H1 (cell line): ENCODE measurements at regions of chr9 and their contacts with region 1.

Region 1: DNA sequence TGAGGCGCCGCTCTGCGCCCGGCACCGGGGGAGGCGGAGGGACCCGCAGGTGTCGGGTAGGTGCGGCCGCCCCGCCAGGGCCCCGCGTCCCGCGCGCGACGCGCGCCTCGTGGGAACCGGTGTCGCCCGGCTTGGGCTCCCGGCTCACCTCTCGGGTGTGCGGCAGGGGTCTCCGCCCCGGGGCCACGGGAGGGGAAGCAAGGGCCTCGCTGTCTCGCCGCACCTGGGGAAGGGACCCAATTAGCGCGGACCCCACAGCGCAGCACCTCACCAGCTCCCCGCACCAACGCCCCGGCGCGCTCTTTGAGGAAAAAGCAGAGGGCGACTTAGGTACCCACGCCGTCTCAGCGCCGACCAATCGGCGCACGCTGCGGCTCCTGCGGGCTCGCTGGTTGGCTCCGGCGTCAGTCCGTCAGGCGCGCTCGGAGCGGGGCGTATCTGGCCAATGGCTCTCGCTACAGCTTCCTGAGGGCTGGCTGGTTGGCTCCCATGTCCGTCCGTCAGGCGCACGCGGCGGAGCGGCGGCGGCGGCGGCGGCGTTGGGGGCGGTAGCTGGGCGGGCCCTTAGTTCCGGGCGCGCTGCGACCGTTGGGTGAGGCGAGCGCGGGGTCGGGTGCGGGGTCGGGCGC is at the start of gene TRAF2:
- DNase-seq: peak; percentile 98 to 99
- H3K4me3 ChIP-seq: peak within 1 kb of the TSS; percentile 74 to 98 (median 78)
- H3K27ac ChIP-seq: 0 out of 2 replicates have a peak within 1 kb of the TSS, but pooled peaks have one; percentile 42
- H3K4me1 ChIP-seq: peaks cover 0 to 6% (median 2%) of the 10 kb centered on the region in 4 experiments; a peak in 4 of 7 replicates
- H3K27me3 ChIP-seq: no peaks in the 10 kb centered on the region
- CTCF ChIP-seq: no peak
- EP300 ChIP-seq: no peak
- POLR2A ChIP-seq: peak in 1 of 2 experiments; percentile 66; a peak in 1 of 3 replicates
- RAD21 ChIP-seq: no peak
- total RNA-seq, gene TRAF2: 50.2 and 50.5 TPM in 2 replicates

Region 2: GRCh38 chr9:136849038-136849959 is 36.8 kb before region 1 on chr9 and contains the start of gene PHPT1:
- CTCF ChIA-PET with region 1: interaction called, 7 read pairs
- POLR2A ChIA-PET with region 1: interaction called, 15 read pairs
- DNase-seq: peak; percentile 98
- H3K4me3 ChIP-seq: peak within 1 kb of the TSS; percentile 81 to 89 (median 84)
- H3K27ac ChIP-seq: peak within 1 kb of the TSS; percentile 90
- H3K4me1 ChIP-seq: peaks cover 0 to 18% (median 8%) of the 10 kb centered on the region in 4 experiments; a peak in 5 of 7 replicates
- H3K27me3 ChIP-seq: peaks cover 2 to 12% (median 7%) of the 10 kb centered on the region in 4 experiments; a peak in 6 of 7 replicates
- CTCF ChIP-seq: no peak
- EP300 ChIP-seq: no peak
- POLR2A ChIP-seq: peak in 1 of 2 experiments; percentile 99; a peak in 2 of 3 replicates
- RAD21 ChIP-seq: no peak
- total RNA-seq, gene PHPT1: 109 and 111 TPM in 2 replicates

Region 3: GRCh38 chr9:136858844-136859757 is 27.0 kb before region 1 on chr9:
- CTCF ChIA-PET with region 1: interaction called, 8 read pairs
- POLR2A ChIA-PET with region 1: interaction called, 16 read pairs
- DNase-seq: peak in 1 of 2 experiments; percentile 46
- H3K4me3 ChIP-seq: no peak overlapping the region
- H3K27ac ChIP-seq: no peak overlapping the region
- H3K4me1 ChIP-seq: no peaks in the 10 kb centered on the region; a peak in 1 of 7 replicates
- H3K27me3 ChIP-seq: no peaks in the 10 kb centered on the region
- CTCF ChIP-seq: no peak
- EP300 ChIP-seq: no peak
- POLR2A ChIP-seq: no peak
- RAD21 ChIP-seq: no peak

Region 4: GRCh38 chr9:136865735-136866103 is 20.3 kb before region 1 on chr9:
- CTCF ChIA-PET with region 1: interaction called, 8 read pairs
- POLR2A ChIA-PET with region 1: interaction called, 16 read pairs
- DNase-seq: no peak
- H3K4me3 ChIP-seq: peak overlapping the region; percentile 49 to 99 (median 70)
- H3K27ac ChIP-seq: peak overlapping the region; percentile 81; the same call in 1 of the 2 replicates
- H3K4me1 ChIP-seq: peaks cover 0 to 6% (median 5%) of the 10 kb centered on the region in 4 experiments; a peak in 5 of 7 replicates
- H3K27me3 ChIP-seq: no peaks in the 10 kb centered on the region
- CTCF ChIP-seq: no peak
- EP300 ChIP-seq: no peak
- POLR2A ChIP-seq: no peak
- RAD21 ChIP-seq: no peak

Region 5: DNA sequence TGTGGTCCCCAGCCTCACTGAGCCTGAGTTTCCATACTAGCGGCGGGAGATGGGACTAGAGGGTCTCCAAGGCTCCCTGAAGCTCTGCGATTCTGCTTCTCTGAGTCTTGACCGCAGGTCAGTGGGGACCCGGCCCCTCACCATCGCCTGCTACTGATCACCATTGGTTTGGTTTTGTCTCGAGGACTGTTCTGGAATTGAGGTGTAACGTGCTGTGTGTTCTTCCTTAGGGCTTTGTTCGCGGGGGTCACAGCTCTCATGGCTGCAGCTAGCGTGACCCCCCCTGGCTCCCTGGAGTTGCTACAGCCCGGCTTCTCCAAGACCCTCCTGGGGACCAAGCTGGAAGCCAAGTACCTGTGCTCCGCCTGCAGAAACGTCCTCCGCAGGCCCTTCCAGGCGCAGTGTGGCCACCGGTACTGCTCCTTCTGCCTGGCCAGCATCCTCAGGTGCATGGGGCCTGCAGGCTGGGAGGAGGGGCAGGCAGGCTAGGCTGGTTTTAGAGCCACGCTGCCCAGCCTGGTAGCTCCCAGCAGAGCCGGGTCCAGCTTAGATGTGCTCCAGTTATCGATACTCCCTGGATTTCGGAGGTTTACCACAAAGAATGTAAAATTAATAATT is 12.5 kb after region 1 on chr9:
- CTCF ChIA-PET with region 1: interaction called, 4 read pairs
- POLR2A ChIA-PET with region 1: interaction called, 10 read pairs
- DNase-seq: no peak
- H3K4me3 ChIP-seq: no peak overlapping the region
- H3K27ac ChIP-seq: no peak overlapping the region
- H3K4me1 ChIP-seq: no peaks in the 10 kb centered on the region; a peak in 1 of 7 replicates
- H3K27me3 ChIP-seq: no peaks in the 10 kb centered on the region
- CTCF ChIP-seq: no peak
- EP300 ChIP-seq: no peak
- POLR2A ChIP-seq: no peak
- RAD21 ChIP-seq: no peak